MCF 10A (cell line): ENCODE measurements at regions of chr3 and their contacts with region 1.

Region 1: DNA sequence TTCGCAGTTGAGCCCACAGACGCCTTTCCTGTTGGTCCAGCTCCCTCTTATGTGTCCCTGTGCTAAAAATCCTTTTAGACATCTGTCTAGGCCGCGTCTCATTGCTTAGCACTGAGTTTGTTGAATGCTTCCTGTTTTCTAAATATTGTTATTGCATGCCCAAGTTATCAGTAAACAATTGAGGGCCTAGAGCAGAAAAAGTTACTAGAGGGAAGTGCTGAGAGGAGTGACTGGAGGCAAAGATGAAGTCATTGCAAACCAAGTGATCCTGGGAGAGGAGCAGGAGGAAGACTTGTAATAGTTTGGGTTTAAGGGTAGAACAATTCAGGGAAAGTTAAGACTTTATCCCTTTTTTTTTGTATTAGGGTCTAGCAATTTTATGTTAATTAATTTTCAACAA is 88.1 kb downstream of the DCUN1D1 start:
- DNase-seq: no peak
- H3K4me3 Mint-ChIP-seq: no peak overlapping the region
- H3K27ac Mint-ChIP-seq: no peak overlapping the region
- H3K4me1 Mint-ChIP-seq: no peaks in the 10 kb centered on the region
- H3K27me3 Mint-ChIP-seq: no peaks in the 10 kb centered on the region
- CTCF ChIP-seq: no peak

Region 2: GRCh38 chr3:182855076-182855475 is 37.1 kb before region 1 on chr3:
- CTCF ChIA-PET with region 1: no interaction called
- POLR2A ChIA-PET with region 1: no interaction called
- intact Hi-C with region 1: no loop called
- DNase-seq: no peak
- H3K4me3 Mint-ChIP-seq: no peak overlapping the region
- H3K27ac Mint-ChIP-seq: no peak overlapping the region
- H3K4me1 Mint-ChIP-seq: no peaks in the 10 kb centered on the region
- H3K27me3 Mint-ChIP-seq: no peaks in the 10 kb centered on the region
- CTCF ChIP-seq: no peak

Region 3: DNA sequence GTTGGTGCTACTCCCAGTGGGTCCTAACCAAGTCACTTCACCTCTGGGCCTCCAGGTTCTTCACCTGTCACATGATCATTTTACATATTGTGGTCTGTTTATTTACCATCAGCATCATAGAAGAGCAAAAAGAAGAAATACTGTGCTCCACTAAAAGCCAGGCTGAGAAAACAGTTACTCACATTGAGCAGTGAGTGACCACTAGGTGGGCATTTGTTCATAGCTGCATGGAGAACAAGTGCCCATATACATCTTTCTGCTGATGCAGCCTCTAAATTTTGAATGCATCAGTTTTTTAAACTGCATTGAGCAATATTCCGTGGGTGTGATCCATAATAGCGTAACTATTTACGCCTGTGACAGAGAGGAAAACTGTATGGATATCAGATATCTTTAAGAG is 11.9 kb after region 1 on chr3:
- CTCF ChIA-PET with region 1: interaction called, 4 read pairs
- POLR2A ChIA-PET with region 1: interaction called, 12 read pairs
- intact Hi-C with region 1: no loop called
- DNase-seq: no peak
- H3K4me3 Mint-ChIP-seq: no peak overlapping the region
- H3K27ac Mint-ChIP-seq: no peak overlapping the region
- H3K4me1 Mint-ChIP-seq: no peaks in the 10 kb centered on the region
- H3K27me3 Mint-ChIP-seq: no peaks in the 10 kb centered on the region
- CTCF ChIP-seq: no peak